ENCODE measurements at regions of chr12 and their contacts with region 1.

Region 1: GRCh38 chr12:116703214-116703795 is 34.6 kb downstream of the SPRING1 start:
- DNase-seq: peak; percentile 37 to 81 (median 58)
- ATAC-seq: peak; percentile 66
- H3K4me3 ChIP-seq: no peak overlapping the region
- H3K4me3 Mint-ChIP-seq: no peak overlapping the region
- H3K27ac ChIP-seq: no peak overlapping the region
- H3K27ac Mint-ChIP-seq: no peak overlapping the region
- H3K4me1 ChIP-seq: peaks cover 2% of the 10 kb centered on the region
- H3K4me1 Mint-ChIP-seq: peaks cover 4% of the 10 kb centered on the region
- H3K27me3 ChIP-seq: no peaks in the 10 kb centered on the region
- H3K27me3 Mint-ChIP-seq: peaks cover 9% of the 10 kb centered on the region
- CTCF ChIP-seq: peak; percentile 92

Region 2: GRCh38 chr12:116599285-116600136 is 103.8 kb before region 1 on chr12:
- CTCF ChIA-PET with region 1: no interaction called
- POLR2A ChIA-PET with region 1: no interaction called
- intact Hi-C with region 1: no loop called
- DNase-seq: peak; percentile 44 to 77 (median 58)
- ATAC-seq: peak; percentile 64
- H3K4me3 ChIP-seq: peak overlapping the region; percentile 4
- H3K4me3 Mint-ChIP-seq: no peak overlapping the region
- H3K27ac ChIP-seq: no peak overlapping the region
- H3K27ac Mint-ChIP-seq: no peak overlapping the region
- H3K4me1 ChIP-seq: peaks cover 23% of the 10 kb centered on the region
- H3K4me1 Mint-ChIP-seq: peaks cover 36% of the 10 kb centered on the region
- H3K27me3 ChIP-seq: no peaks in the 10 kb centered on the region
- H3K27me3 Mint-ChIP-seq: no peaks in the 10 kb centered on the region
- CTCF ChIP-seq: peak; percentile 67

Region 3: DNA sequence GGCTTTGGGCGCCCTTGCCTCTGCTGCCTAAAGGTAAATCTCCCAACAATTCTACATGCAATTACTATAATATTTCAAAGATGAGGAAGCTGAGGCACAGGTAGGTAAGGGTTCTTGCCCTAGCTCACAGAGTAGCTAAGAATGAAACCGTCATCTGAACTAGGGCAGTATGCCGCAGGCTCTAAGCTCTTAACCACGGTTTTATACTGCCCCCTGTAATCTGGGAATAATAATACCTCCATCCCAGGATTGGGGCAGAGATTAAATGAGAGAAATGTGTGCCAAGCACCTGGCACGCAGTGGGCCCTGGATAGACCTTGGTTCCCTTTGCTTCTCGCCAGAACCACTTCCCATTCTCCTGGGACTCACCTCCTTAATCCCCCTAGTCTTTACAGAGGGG is 179.4 kb after region 1 on chr12:
- CTCF ChIA-PET with region 1: no interaction called
- POLR2A ChIA-PET with region 1: no interaction called
- intact Hi-C with region 1: loop called in 1 of 2 experiments (anchors 2 kb)
- DNase-seq: peak in 1 of 14 experiments; percentile 6
- ATAC-seq: no peak
- H3K4me3 ChIP-seq: no peak overlapping the region
- H3K4me3 Mint-ChIP-seq: peak overlapping the region; percentile 18
- H3K27ac ChIP-seq: no peak overlapping the region
- H3K27ac Mint-ChIP-seq: no peak overlapping the region
- H3K4me1 ChIP-seq: peaks cover 34% of the 10 kb centered on the region
- H3K4me1 Mint-ChIP-seq: peaks cover 38% of the 10 kb centered on the region
- H3K27me3 ChIP-seq: peaks cover 46 to 56% of the 10 kb centered on the region in 2 experiments
- H3K27me3 Mint-ChIP-seq: peaks cover 71% of the 10 kb centered on the region
- CTCF ChIP-seq: no peak

Region 4: GRCh38 chr12:116955382-116956021 is 252.2 kb after region 1 on chr12:
- CTCF ChIA-PET with region 1: interaction called, 5 read pairs
- POLR2A ChIA-PET with region 1: no interaction called
- intact Hi-C with region 1: loop called in 1 of 2 experiments (anchors 1 kb)
- DNase-seq: peak in 6 of 14 experiments; percentile 1 to 69 (median 38)
- ATAC-seq: peak; percentile 62
- H3K4me3 ChIP-seq: no peak overlapping the region
- H3K4me3 Mint-ChIP-seq: no peak overlapping the region
- H3K27ac ChIP-seq: no peak overlapping the region
- H3K27ac Mint-ChIP-seq: no peak overlapping the region
- H3K4me1 ChIP-seq: peaks cover 3% of the 10 kb centered on the region
- H3K4me1 Mint-ChIP-seq: peaks cover 12% of the 10 kb centered on the region
- H3K27me3 ChIP-seq: no peaks in the 10 kb centered on the region
- H3K27me3 Mint-ChIP-seq: no peaks in the 10 kb centered on the region
- CTCF ChIP-seq: no peak

Region 5: DNA sequence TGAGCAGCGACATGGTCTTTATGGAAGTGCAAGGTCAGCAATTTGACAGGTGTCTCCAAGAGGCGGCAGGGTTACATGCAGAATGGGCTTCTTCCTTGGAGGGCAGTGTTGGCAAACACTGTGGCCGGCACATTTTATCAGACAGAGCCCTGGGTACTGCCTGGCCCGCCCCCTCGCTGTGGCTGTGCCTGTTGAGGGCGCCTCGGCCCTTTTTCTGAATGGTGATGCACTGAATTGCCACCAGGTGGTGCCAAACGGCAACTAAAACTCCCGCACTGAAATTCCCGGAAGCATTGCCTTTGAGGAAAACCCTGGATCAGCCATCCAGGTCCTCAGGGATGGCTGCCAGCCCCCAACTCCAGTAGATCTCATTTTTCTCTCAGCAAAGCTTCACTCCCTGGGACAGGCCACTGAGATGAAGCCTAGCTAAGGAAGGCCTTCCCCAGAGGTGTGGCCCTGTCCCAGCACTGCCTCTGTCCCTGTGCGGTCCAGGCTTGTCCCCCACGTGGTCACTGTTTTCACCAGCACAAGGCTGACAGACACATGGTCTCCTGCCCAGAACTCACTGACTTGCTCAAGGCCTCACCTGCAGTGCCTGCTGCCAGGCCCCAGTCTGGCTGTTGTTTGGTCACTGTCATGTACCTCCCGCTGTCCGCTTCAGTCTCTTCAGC is 322.3 kb after region 1 on chr12:
- CTCF ChIA-PET with region 1: no interaction called
- POLR2A ChIA-PET with region 1: no interaction called
- intact Hi-C with region 1: loop called in 1 of 2 experiments (anchors 1 kb)
- DNase-seq: peak in 13 of 14 experiments; percentile 14 to 69 (median 32)
- ATAC-seq: peak; percentile 55
- H3K4me3 ChIP-seq: no peak overlapping the region
- H3K4me3 Mint-ChIP-seq: no peak overlapping the region
- H3K27ac ChIP-seq: no peak overlapping the region
- H3K27ac Mint-ChIP-seq: no peak overlapping the region
- H3K4me1 ChIP-seq: peaks cover 8% of the 10 kb centered on the region
- H3K4me1 Mint-ChIP-seq: peaks cover 4% of the 10 kb centered on the region
- H3K27me3 ChIP-seq: no peaks in the 10 kb centered on the region
- H3K27me3 Mint-ChIP-seq: no peaks in the 10 kb centered on the region
- CTCF ChIP-seq: peak; percentile 87

Region 6: DNA sequence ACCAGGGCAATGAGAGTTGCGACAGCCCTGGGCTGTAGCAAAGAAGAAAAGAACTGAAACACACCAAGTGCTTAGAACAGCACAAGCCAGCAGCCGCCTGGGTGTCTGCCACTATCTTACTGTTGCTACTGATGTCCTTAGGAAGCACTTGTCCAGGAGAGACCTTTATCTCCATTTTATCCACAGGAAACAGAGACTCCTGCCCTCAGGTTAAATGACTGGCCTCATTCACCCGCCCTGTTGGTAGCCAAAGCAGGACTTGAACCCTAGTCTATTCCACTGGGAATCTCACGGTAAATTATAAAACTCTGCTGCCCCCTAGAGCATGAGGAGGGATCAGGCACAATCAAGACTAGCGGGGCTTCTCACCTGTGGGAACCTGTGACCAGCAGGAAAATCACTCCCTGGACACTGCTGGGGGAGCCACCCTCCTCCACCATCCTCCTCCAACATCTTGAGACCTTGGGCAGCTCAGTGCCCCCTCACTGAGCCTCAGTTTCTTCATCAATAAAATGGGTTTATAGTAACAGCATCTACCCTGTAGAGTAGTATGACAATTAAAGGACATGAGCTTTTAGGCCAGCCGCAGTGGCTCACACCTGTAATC is 416.4 kb after region 1 on chr12:
- CTCF ChIA-PET with region 1: interaction called, 4 read pairs
- POLR2A ChIA-PET with region 1: no interaction called
- intact Hi-C with region 1: loop called (anchors 1 to 5 kb)
- DNase-seq: peak in 5 of 14 experiments; percentile 8 to 56 (median 43)
- ATAC-seq: no peak
- H3K4me3 ChIP-seq: no peak overlapping the region
- H3K4me3 Mint-ChIP-seq: no peak overlapping the region
- H3K27ac ChIP-seq: no peak overlapping the region
- H3K27ac Mint-ChIP-seq: no peak overlapping the region
- H3K4me1 ChIP-seq: no peaks in the 10 kb centered on the region
- H3K4me1 Mint-ChIP-seq: no peaks in the 10 kb centered on the region
- H3K27me3 ChIP-seq: no peaks in the 10 kb centered on the region
- H3K27me3 Mint-ChIP-seq: no peaks in the 10 kb centered on the region
- CTCF ChIP-seq: peak; percentile 81